Right ventricle myocardium inferior (tissue), 1 donor: ENCODE measurements at regions of chr5 and their contacts with region 1.

Region 1: GRCh38 chr5:15995341-15996052 is 184.1 kb downstream of the MARCHF11 start:
- DNase-seq: no peak
- ATAC-seq: peak; percentile 64

Region 2: DNA sequence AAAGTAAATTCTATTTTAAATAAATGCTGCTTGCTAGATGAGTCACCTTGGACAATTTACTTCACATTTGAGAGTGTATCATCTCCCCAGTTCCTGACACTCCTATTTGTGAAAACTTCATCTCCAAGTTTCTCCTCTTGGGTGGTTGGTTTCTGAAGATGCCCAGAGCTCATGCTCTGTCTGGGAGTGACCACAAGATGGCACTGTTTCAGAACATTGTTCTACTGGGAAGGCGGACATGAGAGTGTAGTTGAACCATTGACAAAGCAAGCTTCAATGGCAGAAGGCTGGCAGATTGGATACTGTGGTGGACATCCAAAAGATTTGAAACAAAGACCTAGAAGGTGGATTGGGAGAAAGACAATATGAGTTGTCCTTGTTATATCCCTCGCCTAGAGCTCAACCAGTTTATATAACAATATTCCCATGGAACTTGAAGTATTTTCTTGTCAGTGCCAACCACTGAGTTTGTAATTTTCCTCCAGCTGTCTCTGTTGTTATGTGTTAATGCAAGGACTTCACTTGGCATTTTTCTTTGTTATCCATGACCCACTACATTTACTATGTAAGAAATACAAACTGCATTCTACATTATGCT is 889.6 kb before region 1 on chr5:
- intact Hi-C with region 1: loop called (anchors 5 kb)
- DNase-seq: no peak
- ATAC-seq: peak; percentile 54

Region 3: GRCh38 chr5:15285901-15286583 is 709.5 kb before region 1 on chr5:
- intact Hi-C with region 1: loop called (anchors 5 kb)
- DNase-seq: no peak
- ATAC-seq: peak; percentile 69

Region 4: DNA sequence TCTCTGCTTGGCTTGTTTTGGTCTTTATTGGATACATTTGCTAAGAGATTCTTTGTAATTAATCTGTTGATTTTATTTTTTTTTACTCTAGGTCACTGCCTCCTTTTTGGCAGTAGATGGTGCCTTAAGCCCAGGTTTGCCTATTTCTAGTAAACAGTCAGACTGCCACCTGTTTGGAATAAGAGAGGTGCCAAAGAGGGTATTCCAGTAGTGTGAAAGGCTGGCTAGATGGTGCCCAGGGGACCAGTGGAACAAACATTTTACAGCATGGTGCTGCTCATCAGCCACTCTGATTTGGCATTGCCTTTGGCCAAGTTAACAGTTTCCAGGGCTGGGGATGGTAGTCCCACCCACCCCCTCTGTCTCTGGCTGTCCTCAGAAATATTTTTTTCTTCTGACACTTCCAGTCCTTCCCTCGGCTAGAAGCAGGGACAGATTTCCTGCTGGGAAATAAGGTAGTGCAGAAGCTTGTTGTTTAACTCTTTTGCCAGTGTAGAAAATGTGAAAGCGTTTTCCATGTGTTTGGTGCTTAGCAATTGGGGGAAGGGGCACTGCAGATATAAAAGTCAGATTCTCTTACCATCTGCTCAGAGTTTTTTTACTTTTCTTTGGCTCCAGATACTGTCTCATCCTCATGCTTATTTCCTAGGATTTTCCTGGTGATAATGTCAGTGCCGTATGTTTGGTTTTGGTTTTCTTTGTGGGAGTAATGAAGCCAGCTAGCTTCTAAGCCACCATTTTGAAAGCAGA is 532.1 kb before region 1 on chr5:
- intact Hi-C with region 1: loop called (anchors 5 kb)
- DNase-seq: no peak
- ATAC-seq: peak; percentile 20

Region 5: GRCh38 chr5:15499528-15500324 is 495.8 kb before region 1 on chr5 and contains the start of gene FBXL7:
- intact Hi-C with region 1: loop called (anchors 5 kb)
- DNase-seq: peak; percentile 91
- ATAC-seq: peak; percentile 89
- total RNA-seq, gene FBXL7: 17.8 TPM

Region 6: GRCh38 chr5:15834596-15835245 is 160.8 kb before region 1 on chr5:
- intact Hi-C with region 1: loop called (anchors 10 kb)
- DNase-seq: no peak
- ATAC-seq: no peak